Caco-2 (cell line): ENCODE measurements at regions of chr1 and their contacts with region 1.

Region 1: GRCh38 chr1:85224734-85225623 is 24.2 kb upstream of the SYDE2 start:
- DNase-seq: peak; percentile 90 to 95
- H3K4me3 ChIP-seq: no peak overlapping the region
- H3K4me3 Mint-ChIP-seq: peak overlapping the region; percentile 66
- H3K27ac Mint-ChIP-seq: peak overlapping the region; percentile 93
- H3K4me1 ChIP-seq: peaks cover 53% of the 10 kb centered on the region
- H3K4me1 Mint-ChIP-seq: peaks cover 41% of the 10 kb centered on the region
- H3K27me3 ChIP-seq: no peaks in the 10 kb centered on the region
- H3K27me3 Mint-ChIP-seq: no peaks in the 10 kb centered on the region
- CTCF ChIP-seq: no peak

Region 2: GRCh38 chr1:85091671-85092280 is 133.2 kb before region 1 on chr1:
- CTCF ChIA-PET with region 1: no interaction called
- POLR2A ChIA-PET with region 1: no interaction called
- intact Hi-C with region 1: no loop called
- DNase-seq: no peak
- H3K4me3 ChIP-seq: no peak overlapping the region
- H3K4me3 Mint-ChIP-seq: no peak overlapping the region
- H3K27ac Mint-ChIP-seq: no peak overlapping the region
- H3K4me1 ChIP-seq: no peaks in the 10 kb centered on the region
- H3K4me1 Mint-ChIP-seq: no peaks in the 10 kb centered on the region
- H3K27me3 ChIP-seq: no peaks in the 10 kb centered on the region
- H3K27me3 Mint-ChIP-seq: peaks cover 2% of the 10 kb centered on the region
- CTCF ChIP-seq: no peak

Region 3: GRCh38 chr1:85134576-85135395 is 90.2 kb before region 1 on chr1:
- CTCF ChIA-PET with region 1: no interaction called
- POLR2A ChIA-PET with region 1: no interaction called
- intact Hi-C with region 1: loop called (anchors 2 kb)
- DNase-seq: peak; percentile 63
- H3K4me3 ChIP-seq: no peak overlapping the region
- H3K4me3 Mint-ChIP-seq: no peak overlapping the region
- H3K27ac Mint-ChIP-seq: no peak overlapping the region
- H3K4me1 ChIP-seq: peaks cover 27% of the 10 kb centered on the region
- H3K4me1 Mint-ChIP-seq: no peaks in the 10 kb centered on the region
- H3K27me3 ChIP-seq: no peaks in the 10 kb centered on the region
- H3K27me3 Mint-ChIP-seq: no peaks in the 10 kb centered on the region
- CTCF ChIP-seq: no peak

Region 4: DNA sequence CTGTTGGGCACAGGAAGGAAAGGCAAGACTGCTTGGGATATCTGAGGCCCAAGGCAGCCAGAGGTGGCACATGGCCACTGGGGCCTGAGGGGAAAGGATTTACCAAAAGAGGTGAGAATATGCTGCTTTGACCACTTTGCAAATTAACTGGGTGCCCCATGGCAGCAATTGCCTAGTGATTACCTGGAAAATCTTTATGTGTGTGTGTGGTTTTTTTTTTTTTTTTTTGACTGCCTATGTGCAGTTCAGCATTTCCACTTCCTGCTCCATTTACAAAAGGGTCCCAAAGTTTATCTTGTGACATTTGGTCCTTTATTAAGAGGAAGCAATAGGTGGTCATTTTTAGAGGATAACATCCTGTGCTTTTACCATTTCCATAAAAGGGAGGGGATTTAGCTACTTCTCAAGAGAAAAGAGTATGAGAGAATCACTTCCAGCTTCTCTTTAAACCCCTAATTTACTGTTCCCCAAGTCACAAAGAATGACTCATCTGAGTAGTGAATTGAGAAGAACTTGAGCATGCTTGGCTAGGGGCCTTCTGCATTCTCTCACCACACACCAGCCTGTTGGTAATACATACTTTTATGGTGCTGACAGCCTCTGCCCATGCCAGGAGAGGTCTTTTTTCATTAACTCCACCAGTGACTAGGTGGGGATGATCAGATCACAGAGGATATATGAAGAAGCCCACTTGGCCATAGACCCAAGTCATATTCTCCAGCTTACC is 76.3 kb before region 1 on chr1:
- CTCF ChIA-PET with region 1: no interaction called
- POLR2A ChIA-PET with region 1: no interaction called
- intact Hi-C with region 1: loop called (anchors 2 kb)
- DNase-seq: no peak
- H3K4me3 ChIP-seq: no peak overlapping the region
- H3K4me3 Mint-ChIP-seq: no peak overlapping the region
- H3K27ac Mint-ChIP-seq: no peak overlapping the region
- H3K4me1 ChIP-seq: peaks cover 25% of the 10 kb centered on the region
- H3K4me1 Mint-ChIP-seq: peaks cover 31% of the 10 kb centered on the region
- H3K27me3 ChIP-seq: no peaks in the 10 kb centered on the region
- H3K27me3 Mint-ChIP-seq: no peaks in the 10 kb centered on the region
- CTCF ChIP-seq: no peak

Region 5: DNA sequence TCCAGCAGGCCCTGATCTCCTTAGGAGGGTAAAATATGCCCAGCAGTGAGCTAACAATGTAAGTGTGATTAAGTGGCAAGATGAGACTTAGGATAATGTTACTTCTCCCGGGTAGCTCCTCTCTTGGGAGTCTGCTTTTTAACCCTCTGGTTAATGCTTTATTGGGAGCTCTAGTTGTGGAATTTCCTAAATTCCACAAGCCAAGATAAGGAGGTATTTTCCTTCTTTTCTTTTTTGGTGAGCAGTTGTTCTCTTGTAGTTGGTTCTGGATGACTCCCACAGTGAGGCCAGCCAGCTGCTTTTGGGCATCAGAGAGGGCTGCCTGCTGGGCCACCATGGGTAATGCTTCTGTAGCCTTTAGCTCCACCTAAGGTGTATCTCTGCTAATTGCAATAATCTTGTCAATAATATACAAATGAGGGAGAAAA is 15.2 kb after region 1 on chr1:
- CTCF ChIA-PET with region 1: interaction called, 4 read pairs
- POLR2A ChIA-PET with region 1: no interaction called
- intact Hi-C with region 1: loop called (anchors 1 kb)
- DNase-seq: peak; percentile 37 to 40
- H3K4me3 ChIP-seq: no peak overlapping the region
- H3K4me3 Mint-ChIP-seq: no peak overlapping the region
- H3K27ac Mint-ChIP-seq: no peak overlapping the region
- H3K4me1 ChIP-seq: peaks cover 30% of the 10 kb centered on the region
- H3K4me1 Mint-ChIP-seq: peaks cover 6% of the 10 kb centered on the region
- H3K27me3 ChIP-seq: no peaks in the 10 kb centered on the region
- H3K27me3 Mint-ChIP-seq: no peaks in the 10 kb centered on the region
- CTCF ChIP-seq: no peak

Region 6: DNA sequence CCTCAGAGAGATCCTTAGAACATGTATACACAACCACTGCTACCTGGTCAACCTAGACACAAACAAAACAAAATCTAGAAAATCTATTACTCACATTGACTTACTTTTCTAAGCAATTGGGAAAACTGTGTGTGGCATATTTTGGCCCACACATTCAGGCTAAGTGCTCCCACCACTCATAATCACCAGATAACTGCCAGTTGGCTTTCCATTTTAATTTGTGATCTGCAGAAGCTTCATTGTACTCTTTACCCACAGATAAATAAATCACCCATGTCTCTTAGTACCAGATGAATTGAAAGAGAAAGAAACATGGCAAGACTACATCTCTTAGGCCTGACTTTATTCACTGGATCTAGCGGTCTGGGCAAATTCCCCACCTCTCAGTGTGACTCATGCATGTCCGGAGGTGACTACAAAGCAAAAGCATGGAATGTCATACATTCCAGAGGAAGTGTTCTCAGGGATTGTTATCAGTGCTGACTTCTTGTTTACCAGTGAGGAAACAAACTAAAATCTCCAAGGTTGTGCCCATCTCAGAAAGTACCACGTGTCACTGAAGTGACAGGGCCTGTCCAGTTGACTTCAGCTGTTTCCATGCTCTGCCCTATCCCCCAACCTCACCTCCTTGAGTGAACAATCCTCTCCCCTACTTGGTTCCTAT is 103.9 kb after region 1 on chr1:
- CTCF ChIA-PET with region 1: no interaction called
- POLR2A ChIA-PET with region 1: no interaction called
- intact Hi-C with region 1: no loop called
- DNase-seq: peak; percentile 70 to 74
- H3K4me3 ChIP-seq: no peak overlapping the region
- H3K4me3 Mint-ChIP-seq: peak overlapping the region; percentile 31
- H3K27ac Mint-ChIP-seq: peak overlapping the region; percentile 89
- H3K4me1 ChIP-seq: peaks cover 58% of the 10 kb centered on the region
- H3K4me1 Mint-ChIP-seq: peaks cover 33% of the 10 kb centered on the region
- H3K27me3 ChIP-seq: no peaks in the 10 kb centered on the region
- H3K27me3 Mint-ChIP-seq: no peaks in the 10 kb centered on the region
- CTCF ChIP-seq: no peak